CD4-positive, alpha-beta memory T cell (primary cell): ENCODE measurements at regions of chr22 and their contacts with region 1.

Region 1: GRCh38 chr22:40346178-40347118 is at the start of gene ADSL:
- DNase-seq: peak; percentile 81 to 86 (median 84)
- H3K4me3 ChIP-seq: peak within 1 kb of the TSS; percentile 91 to 95
- H3K4me3 Mint-ChIP-seq: peak within 1 kb of the TSS; percentile 92 to 99 (median 98)
- H3K27ac ChIP-seq: peak within 1 kb of the TSS; percentile 81
- H3K27ac Mint-ChIP-seq: peak within 1 kb of the TSS; percentile 92 to 99 (median 98)
- H3K4me1 ChIP-seq: peaks cover 63% of the 10 kb centered on the region
- H3K4me1 Mint-ChIP-seq: peaks cover 37 to 70% (median 51%) of the 10 kb centered on the region in 4 donors
- H3K27me3 ChIP-seq: no peaks in the 10 kb centered on the region
- H3K27me3 Mint-ChIP-seq: no peaks in the 10 kb centered on the region
- total RNA-seq, gene ADSL: 63.3 to 81.1 TPM

Region 2: GRCh38 chr22:39532215-39533071 is 814.0 kb before region 1 on chr22 and contains the start of gene RPS19BP1:
- CTCF ChIA-PET with region 1: interaction called, 10 read pairs
- POLR2A ChIA-PET with region 1: interaction called, 5 read pairs
- intact Hi-C with region 1: loop called (anchors 1 kb)
- DNase-seq: peak; percentile 98 to 100 (median 99)
- H3K4me3 ChIP-seq: peak within 1 kb of the TSS; percentile 71 to 91
- H3K4me3 Mint-ChIP-seq: peak within 1 kb of the TSS; percentile 92 to 98 (median 96)
- H3K27ac ChIP-seq: peak within 1 kb of the TSS; percentile 93
- H3K27ac Mint-ChIP-seq: peak within 1 kb of the TSS; percentile 93 to 100 (median 97)
- H3K4me1 ChIP-seq: peaks cover 56% of the 10 kb centered on the region
- H3K4me1 Mint-ChIP-seq: peaks cover 35 to 61% (median 51%) of the 10 kb centered on the region in 4 donors
- H3K27me3 ChIP-seq: no peaks in the 10 kb centered on the region
- H3K27me3 Mint-ChIP-seq: no peaks in the 10 kb centered on the region
- total RNA-seq, gene RPS19BP1: 66.9 to 67.1 TPM

Region 3: DNA sequence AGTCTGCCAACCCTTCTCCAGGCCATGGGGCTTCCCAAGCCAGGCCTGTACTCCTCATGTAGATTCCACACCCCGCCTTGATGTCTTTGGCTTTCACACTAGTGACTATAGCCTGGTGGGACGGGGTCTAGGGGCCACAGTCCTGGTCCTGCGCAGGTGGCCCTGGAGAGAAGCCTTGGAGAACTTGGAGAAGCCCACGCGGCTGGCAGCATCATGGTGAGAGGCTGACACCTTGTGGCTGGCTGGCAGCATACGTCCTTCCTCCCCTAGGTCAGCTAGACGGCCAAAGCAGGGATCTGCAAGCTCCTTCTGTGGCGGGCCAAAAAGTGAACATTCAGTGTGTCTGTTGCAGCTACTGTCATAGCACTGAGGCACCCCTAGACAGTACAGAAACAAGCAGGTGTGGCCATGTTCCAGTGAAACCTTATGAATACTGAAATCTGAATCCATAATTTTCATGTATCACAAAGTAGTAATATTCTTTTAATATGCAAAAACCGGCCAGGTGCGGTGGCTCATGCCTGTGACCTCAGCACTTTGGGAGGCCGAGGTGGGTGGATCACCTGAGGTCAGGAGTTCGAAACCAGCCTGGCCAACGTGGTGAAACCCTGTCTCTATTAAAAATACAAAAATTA is 309.7 kb before region 1 on chr22:
- CTCF ChIA-PET with region 1: interaction called, 12 read pairs
- POLR2A ChIA-PET with region 1: interaction called, 4 read pairs
- intact Hi-C with region 1: no loop called
- DNase-seq: peak in 4 of 5 donors; percentile 29 to 40 (median 34)
- H3K4me3 ChIP-seq: no peak overlapping the region
- H3K4me3 Mint-ChIP-seq: no peak overlapping the region
- H3K27ac ChIP-seq: no peak overlapping the region
- H3K27ac Mint-ChIP-seq: no peak overlapping the region
- H3K4me1 ChIP-seq: no peaks in the 10 kb centered on the region
- H3K4me1 Mint-ChIP-seq: peaks cover 0 to 2% (median under 1%) of the 10 kb centered on the region in 4 donors
- H3K27me3 ChIP-seq: no peaks in the 10 kb centered on the region
- H3K27me3 Mint-ChIP-seq: peaks cover 11 to 19% of the 10 kb centered on the region in 2 donors

Region 4: DNA sequence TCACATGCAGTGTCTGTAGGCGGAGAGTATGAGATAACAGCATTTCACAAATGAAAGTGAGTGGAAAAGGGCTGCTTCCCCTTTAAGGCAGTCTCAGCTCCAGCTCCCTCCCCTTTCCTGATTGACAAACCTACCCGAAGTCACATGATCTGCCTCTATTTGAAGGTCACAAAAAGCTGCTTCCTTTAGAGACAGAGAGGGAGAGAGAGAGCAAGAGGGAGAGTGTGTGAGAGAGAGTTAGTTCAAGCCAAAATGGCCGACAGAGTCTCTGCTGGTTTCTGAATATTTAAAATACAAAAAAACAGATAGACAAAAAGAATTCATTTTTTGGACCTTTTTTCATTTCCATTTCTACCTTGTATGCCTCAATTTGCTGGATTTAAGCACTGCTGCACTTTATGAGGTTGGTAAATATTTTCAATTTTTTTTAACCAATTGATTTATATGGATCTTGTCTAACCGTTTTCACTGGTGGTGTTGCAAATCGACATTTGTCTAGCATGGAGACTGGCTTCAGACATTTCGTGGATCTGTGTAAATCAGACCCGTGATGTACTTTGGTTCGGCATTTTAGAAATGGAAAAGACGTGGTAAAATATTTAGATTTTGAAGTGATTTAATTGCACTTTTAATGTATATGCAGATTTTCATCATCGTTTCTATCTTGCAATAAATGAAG is 168.6 kb before region 1 on chr22 and contains the start of gene TNRC6B:
- CTCF ChIA-PET with region 1: interaction called, 21 read pairs
- POLR2A ChIA-PET with region 1: interaction called, 50 read pairs
- intact Hi-C with region 1: loop called (anchors 1 kb)
- DNase-seq: peak; percentile 88 to 94 (median 90)
- H3K4me3 ChIP-seq: peak within 1 kb of the TSS; percentile 56 to 84
- H3K4me3 Mint-ChIP-seq: peak within 1 kb of the TSS; percentile 79 to 97 (median 92)
- H3K27ac ChIP-seq: peak within 1 kb of the TSS; percentile 60
- H3K27ac Mint-ChIP-seq: peak within 1 kb of the TSS; percentile 84 to 98 (median 92)
- H3K4me1 ChIP-seq: peaks cover 67% of the 10 kb centered on the region
- H3K4me1 Mint-ChIP-seq: peaks cover 46 to 74% (median 58%) of the 10 kb centered on the region in 4 donors
- H3K27me3 ChIP-seq: no peaks in the 10 kb centered on the region
- H3K27me3 Mint-ChIP-seq: no peaks in the 10 kb centered on the region
- total RNA-seq, gene TNRC6B: 137 to 155 TPM

Region 5: GRCh38 chr22:40243891-40244290 is 102.6 kb before region 1 on chr22:
- CTCF ChIA-PET with region 1: interaction called, 23 read pairs
- POLR2A ChIA-PET with region 1: interaction called, 8 read pairs
- intact Hi-C with region 1: loop called (anchors 2 kb)
- DNase-seq: peak in 4 of 5 donors; percentile 46 to 61 (median 50)
- H3K4me3 ChIP-seq: peak overlapping the region in 1 of 2 donors; percentile 13
- H3K4me3 Mint-ChIP-seq: peak overlapping the region; percentile 69 to 86 (median 77)
- H3K27ac ChIP-seq: peak overlapping the region; percentile 35
- H3K27ac Mint-ChIP-seq: peak overlapping the region; percentile 53 to 88 (median 79)
- H3K4me1 ChIP-seq: peaks cover 95% of the 10 kb centered on the region
- H3K4me1 Mint-ChIP-seq: peaks cover 63 to 95% (median 76%) of the 10 kb centered on the region in 4 donors
- H3K27me3 ChIP-seq: no peaks in the 10 kb centered on the region
- H3K27me3 Mint-ChIP-seq: no peaks in the 10 kb centered on the region

Region 6: DNA sequence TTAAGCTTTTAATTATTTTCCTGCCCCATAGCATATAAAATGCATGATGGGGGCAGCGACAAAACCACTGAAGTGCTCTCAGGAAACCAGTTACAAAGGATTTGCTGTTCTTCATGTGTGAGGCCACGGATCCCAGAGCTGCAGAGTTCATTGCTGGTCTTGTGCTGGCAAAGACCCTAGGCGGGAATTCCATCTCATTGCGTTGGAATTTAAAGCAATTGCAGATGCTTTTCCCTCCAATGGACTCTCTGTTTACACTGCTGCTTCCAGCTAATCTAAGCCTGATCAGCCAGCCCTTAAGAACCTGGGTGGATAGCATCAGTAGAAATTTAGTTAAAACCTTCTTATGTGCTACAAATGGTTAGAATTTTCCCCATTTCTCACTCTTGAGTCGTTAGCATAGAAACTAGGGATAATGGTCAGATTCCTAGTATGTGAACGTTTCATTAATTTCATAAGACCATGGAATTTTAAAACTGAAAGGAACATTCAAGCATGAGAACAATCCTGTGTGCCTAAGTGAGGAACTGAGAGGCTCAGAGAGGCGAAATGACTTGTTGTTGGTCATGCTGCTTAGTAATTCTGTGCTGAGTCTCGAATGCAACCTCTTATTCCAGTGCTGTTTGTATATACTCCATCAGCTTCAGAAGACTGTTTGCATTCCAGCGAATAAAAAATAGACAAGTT is 36.2 kb before region 1 on chr22:
- CTCF ChIA-PET with region 1: interaction called, 13 read pairs
- POLR2A ChIA-PET with region 1: interaction called, 13 read pairs
- intact Hi-C with region 1: loop called (anchors 5 kb)
- DNase-seq: no peak
- H3K4me3 ChIP-seq: no peak overlapping the region
- H3K4me3 Mint-ChIP-seq: no peak overlapping the region
- H3K27ac ChIP-seq: no peak overlapping the region
- H3K27ac Mint-ChIP-seq: peak overlapping the region in 4 of 7 donors; percentile 19 to 82 (median 58)
- H3K4me1 ChIP-seq: peaks cover 14% of the 10 kb centered on the region
- H3K4me1 Mint-ChIP-seq: peaks cover 25 to 39% (median 34%) of the 10 kb centered on the region in 4 donors
- H3K27me3 ChIP-seq: no peaks in the 10 kb centered on the region
- H3K27me3 Mint-ChIP-seq: no peaks in the 10 kb centered on the region